ENCODE measurements at regions of chr14 and their contacts with region 1.

Region 1: DNA sequence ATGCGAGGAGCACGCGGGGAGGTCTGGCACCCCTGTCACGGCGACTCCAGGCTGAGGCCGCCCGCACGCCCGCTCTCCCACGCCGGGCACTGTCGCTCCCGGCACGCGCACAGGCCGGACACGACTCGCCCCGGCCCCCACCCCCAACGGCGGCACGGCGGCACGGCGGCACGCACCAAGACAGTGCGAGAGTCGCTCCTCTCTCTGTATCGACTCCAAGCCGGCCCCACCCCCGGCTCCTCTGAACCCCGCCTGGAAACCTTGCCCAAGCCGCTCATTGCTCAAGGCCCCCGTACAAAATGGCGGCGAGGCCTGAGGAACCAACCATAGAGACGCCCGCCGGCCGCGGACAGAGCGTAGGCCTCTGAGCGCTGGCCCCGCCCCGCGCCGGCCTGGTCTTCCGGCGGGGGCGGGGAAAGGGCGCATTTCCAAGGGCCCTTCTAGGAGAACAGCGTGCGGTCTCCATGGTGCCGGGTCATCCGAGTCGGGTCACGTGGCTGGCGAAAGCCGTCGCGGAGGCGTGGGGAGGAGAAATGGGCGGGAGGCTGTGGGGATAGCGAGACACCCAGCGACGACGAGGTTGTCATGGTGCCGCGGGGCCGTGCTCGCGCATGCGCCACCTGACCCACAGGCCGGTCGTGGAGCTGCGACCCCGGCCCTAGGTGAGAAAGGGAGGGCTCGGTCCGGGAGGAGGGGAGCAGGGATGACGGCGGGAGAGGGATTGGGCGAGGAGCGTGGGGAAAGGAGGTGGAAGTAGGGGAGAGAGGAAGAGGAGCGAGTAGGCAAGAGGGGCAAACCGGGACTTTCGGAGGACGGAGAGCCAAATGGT is at the start of gene CIPC:
- DNase-seq: peak; percentile 99
- H3K4me3 Mint-ChIP-seq: peak within 1 kb of the TSS; percentile 96
- H3K27ac Mint-ChIP-seq: peak within 1 kb of the TSS; percentile 97
- H3K4me1 Mint-ChIP-seq: peaks cover 40% of the 10 kb centered on the region
- H3K27me3 Mint-ChIP-seq: peaks cover 4% of the 10 kb centered on the region
- total RNA-seq, gene CIPC: 10.3 and 11.5 TPM in 2 replicates

Region 2: DNA sequence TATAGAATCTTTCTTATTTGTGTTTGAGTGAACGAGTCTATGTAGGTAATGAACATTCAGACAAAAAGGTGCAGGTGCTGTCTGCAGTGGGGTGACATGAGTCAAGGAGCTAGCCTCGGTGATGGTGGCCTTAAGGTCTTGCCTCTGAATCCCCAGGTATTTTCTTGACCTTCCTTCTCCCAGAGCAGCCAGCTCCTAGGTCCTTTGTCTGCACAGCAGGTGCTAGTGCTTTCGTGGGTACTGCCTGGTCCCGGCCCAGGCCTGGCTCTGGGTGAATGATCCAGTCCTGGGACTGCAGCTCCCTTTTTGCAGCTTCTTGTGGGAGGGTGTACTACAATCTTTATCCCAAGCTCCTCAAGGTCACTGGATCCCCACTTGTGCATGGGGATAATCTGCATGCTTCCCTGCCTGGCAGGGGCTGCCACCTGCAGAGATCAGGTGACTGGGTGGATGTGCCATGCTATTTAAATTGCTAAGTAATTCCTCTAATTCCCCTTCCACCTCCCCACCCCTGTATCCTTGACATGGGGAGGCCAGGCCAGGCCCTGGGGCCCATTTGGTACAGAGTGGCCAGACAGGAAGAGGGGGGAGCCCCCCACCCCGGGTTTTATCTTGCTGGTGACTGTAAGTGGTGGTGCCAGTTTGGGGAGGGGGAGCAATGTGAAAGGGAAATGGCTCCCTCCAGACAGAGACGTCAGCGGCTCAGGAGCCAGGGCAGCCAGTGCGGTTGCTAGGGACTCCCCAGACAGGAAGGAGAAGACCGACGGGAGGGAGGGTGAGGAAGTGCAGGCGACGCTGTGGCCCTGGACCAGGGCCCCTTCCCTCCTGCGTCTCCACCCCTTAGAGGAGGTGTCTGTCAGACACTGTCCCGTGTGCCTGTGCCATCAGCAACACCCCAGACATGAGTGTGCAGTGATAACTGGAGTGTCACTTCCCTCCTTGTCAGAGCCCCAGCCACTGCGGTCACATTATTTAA is 329.9 kb before region 1 on chr14:
- intact Hi-C with region 1: loop called (anchors 2 kb)
- DNase-seq: peak; percentile 74
- H3K4me3 Mint-ChIP-seq: peak overlapping the region; percentile 42
- H3K27ac Mint-ChIP-seq: peak overlapping the region; percentile 79
- H3K4me1 Mint-ChIP-seq: peaks cover 30% of the 10 kb centered on the region
- H3K27me3 Mint-ChIP-seq: peaks cover 26% of the 10 kb centered on the region

Region 3: GRCh38 chr14:76917158-76917596 is 180.7 kb before region 1 on chr14:
- intact Hi-C with region 1: loop called (anchors 1 kb)
- DNase-seq: no peak
- H3K4me3 Mint-ChIP-seq: no peak overlapping the region
- H3K27ac Mint-ChIP-seq: no peak overlapping the region
- H3K4me1 Mint-ChIP-seq: peaks cover 51% of the 10 kb centered on the region
- H3K27me3 Mint-ChIP-seq: no peaks in the 10 kb centered on the region

Region 4: DNA sequence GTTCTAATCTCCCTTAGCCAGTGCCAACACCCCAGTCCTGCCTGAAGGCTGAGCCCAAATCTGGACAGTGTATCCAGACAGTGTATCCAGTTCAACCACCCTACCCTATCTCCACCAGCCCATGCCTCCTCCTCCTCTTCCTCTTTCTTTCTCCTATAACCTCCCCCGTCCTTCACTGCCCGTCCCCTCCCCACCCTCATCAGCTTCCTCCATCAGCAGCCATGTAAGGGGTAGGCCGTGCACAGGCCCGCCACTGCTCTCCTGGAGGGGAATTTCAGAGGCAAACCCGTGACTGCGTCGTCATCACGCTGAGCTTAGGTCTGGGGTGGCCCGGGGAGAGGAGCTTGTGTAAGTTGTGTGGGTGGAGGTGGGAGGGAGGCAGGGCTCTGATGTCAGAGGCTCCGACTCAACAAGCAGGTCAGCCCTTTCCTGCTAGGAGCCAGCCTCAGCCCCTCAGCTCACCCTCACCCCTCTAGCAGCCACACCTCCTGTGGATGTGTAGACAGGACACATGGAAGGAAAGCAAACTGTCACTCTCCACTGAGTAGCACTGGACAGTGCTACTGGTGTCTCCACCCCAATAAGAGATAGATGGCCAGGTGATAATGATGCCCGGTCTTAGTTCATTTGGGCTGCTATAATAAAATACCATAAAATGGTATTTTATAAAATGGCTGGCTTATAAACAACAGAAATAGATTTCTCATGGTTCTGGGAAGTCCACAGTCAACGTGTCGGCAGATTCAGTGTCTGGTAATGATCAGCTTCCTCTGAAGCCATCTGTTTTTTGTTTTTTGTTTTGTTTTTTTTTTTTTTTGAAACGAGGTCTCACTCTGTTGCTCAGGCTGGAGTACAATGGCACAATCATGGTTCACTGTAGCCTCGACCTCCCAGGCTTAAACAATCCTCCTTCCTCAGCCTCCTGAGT is 119.9 kb before region 1 on chr14:
- intact Hi-C with region 1: loop called (anchors 1 kb)
- DNase-seq: peak; percentile 85
- H3K4me3 Mint-ChIP-seq: peak overlapping the region; percentile 45
- H3K27ac Mint-ChIP-seq: peak overlapping the region; percentile 90
- H3K4me1 Mint-ChIP-seq: peaks cover 27% of the 10 kb centered on the region
- H3K27me3 Mint-ChIP-seq: no peaks in the 10 kb centered on the region

Region 5: DNA sequence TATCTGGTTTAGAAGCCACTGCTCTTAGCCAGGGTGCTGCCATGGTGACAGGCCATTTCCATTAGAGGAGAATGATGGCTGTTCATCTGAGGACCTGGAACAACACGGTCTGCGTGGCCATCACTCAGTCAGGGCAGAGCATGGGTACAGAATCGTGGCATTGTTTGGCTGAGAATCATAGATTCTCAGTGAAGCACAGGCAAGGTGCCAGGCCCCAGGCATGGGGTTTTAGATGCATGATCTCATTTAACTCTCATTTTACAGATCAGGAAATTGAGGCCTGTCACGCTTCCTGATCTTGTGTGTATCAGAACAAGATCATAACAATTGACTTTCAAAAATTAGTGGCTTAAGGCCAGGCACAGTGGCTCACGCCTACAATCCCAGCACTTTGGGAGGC is 42.6 kb before region 1 on chr14:
- intact Hi-C with region 1: no loop called
- DNase-seq: no peak
- H3K4me3 Mint-ChIP-seq: no peak overlapping the region
- H3K27ac Mint-ChIP-seq: no peak overlapping the region
- H3K4me1 Mint-ChIP-seq: peaks cover 19% of the 10 kb centered on the region
- H3K27me3 Mint-ChIP-seq: no peaks in the 10 kb centered on the region

Region 6: GRCh38 chr14:77067632-77068514 is 30.0 kb before region 1 on chr14:
- intact Hi-C with region 1: loop called (anchors 1 kb)
- DNase-seq: peak; percentile 27
- H3K4me3 Mint-ChIP-seq: no peak overlapping the region
- H3K27ac Mint-ChIP-seq: no peak overlapping the region
- H3K4me1 Mint-ChIP-seq: no peaks in the 10 kb centered on the region
- H3K27me3 Mint-ChIP-seq: peaks cover 14% of the 10 kb centered on the region

Region 7: DNA sequence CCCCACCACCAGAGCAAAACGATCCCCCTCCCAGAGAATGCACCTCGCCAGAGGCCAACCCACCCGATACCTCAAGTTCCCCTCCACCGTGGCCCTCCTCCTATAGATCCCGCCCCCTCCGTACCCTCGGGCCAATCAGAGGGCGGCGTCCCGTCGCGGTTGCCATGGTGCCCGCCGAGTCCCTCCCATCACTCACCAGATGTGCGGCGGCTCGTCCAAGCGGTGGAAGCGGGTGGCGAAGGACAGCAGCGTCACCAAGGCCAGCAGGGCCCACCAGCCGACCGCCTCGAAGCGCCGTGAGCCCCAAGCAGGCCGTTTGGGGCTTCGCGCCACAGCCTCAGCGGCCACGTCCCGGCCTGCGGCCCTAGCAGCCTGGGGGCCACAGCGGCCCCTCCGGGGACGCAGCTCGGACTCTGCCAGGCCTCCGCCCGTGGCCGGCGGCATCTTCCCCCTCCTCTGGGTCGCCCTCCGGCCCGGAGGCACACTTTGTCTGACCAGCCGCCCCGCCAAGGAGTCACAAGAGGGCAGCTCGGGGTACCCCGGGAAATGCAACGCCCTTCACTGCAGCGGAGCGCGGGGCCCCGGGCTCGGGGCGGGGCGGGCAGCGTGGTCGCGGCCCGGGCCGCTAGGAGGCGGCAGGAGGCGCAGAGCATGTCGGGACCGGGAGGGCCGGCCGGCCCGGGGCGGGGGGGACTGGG is 222.5 kb after region 1 on chr14 and contains the start of gene POMT2:
- intact Hi-C with region 1: loop called (anchors 1 kb)
- DNase-seq: peak; percentile 92
- H3K4me3 Mint-ChIP-seq: peak within 1 kb of the TSS; percentile 92
- H3K27ac Mint-ChIP-seq: peak within 1 kb of the TSS; percentile 99
- H3K4me1 Mint-ChIP-seq: peaks cover 22% of the 10 kb centered on the region
- H3K27me3 Mint-ChIP-seq: no peaks in the 10 kb centered on the region
- total RNA-seq, gene POMT2: 20.5 and 22.1 TPM in 2 replicates

Region 8: DNA sequence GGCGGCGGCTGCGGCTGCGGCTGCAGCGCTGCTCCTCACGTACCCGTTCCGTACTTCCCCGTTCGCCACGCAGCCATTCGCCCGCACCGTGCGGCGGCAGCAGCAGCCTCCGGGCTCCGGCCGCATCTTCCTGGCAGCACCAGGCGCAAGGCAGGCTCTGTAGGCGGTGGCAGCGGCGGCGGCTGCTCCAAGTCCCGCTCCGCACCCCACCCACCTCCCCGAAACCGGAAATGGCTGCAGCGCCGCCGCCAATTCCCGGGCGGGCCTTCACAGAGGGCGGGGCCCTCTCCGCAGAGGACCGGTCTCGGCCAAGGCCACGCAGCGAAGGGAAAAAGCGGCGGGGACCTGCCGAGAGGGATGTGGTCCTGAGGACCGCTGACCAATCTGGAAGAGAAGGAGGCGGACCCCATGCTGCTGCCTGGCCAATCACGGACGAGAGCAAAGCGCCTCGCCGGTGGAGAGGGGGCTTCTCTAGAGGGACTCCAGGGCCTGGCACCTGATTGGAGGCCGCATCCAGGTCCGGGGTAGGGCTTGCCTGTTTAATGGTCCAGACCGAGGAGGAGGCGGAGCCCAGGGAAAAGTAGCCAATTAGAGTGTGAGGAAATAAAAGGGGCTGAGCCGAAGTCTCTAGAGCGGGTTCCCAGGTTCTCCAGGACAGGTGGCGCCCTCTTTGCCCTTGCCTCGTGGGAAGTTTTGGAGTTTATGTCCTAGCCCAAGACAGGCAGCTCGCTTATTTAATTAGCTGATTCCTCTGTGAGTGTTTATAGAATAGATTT is 518.7 kb after region 1 on chr14 and contains the start of gene SPTLC2:
- intact Hi-C with region 1: loop called (anchors 5 kb)
- DNase-seq: peak; percentile 95
- H3K4me3 Mint-ChIP-seq: peak within 1 kb of the TSS; percentile 95
- H3K27ac Mint-ChIP-seq: peak within 1 kb of the TSS; percentile 96
- H3K4me1 Mint-ChIP-seq: peaks cover 46% of the 10 kb centered on the region
- H3K27me3 Mint-ChIP-seq: peaks cover 2% of the 10 kb centered on the region
- total RNA-seq, gene SPTLC2: 29.9 and 31.9 TPM in 2 replicates